AG04450 (cell line): ENCODE measurements at regions of chr2 and their contacts with region 1.

Region 1: DNA sequence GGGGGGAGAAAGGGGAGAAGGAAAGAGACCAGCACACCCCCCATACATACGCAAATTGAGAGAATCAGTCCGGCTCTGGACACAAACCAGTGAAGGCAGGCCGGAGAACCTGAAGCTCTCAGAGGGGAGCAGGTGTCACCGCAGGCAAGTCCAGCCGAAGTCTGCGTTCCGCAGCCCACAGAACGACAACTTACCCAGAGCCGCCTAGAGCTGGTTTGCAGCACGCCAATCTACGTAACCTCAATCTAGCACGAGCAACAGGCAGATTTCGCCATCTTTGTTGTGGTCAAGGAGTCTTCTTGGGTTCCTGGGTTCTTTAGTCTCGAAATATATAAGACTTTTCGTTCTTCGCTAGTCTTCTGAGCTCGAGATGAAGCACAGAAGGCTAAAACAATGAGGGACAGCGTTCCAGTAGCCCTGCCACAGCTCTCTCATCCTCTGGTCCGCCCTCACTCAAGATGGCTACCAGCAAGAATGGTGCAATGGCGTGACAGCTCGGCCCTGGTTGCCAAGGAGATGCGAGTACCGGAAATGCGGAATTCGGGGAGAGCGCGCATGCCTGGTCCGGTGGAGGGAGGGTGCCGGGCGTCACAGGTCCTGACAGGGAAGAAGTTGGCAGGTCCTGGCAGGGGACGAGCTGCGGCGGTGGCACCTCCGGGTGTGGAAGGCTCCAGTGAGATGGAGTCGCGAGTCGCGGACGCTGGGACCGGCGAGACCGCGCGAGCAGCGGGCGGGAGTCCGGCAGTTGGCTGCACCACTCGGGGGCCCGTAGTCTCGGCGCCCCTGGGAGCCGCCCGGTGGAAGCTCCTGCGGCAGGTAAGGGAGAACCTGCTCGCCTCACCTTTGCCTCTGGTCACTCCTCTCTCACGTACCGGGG is at the starts of genes CAMKMT and PREPL:
- DNase-seq: peak; percentile 95
- H3K4me3 ChIP-seq: peak within 1 kb of the TSS; percentile 92
- H3K27ac ChIP-seq: peak within 1 kb of the TSS; percentile 97
- H3K27me3 ChIP-seq: no peaks in the 10 kb centered on the region
- CTCF ChIP-seq: no peak
- polyA plus RNA-seq, gene CAMKMT: 8.0 and 10.2 TPM in 2 replicates
- polyA plus RNA-seq, gene PREPL: 54.6 and 79.6 TPM in 2 replicates

Region 2: GRCh38 chr2:44348400-44348799 is 13.2 kb before region 1 on chr2:
- CTCF ChIA-PET with region 1: interaction called, 7 read pairs
- POLR2A ChIA-PET with region 1: interaction called, 15 read pairs
- DNase-seq: no peak
- H3K4me3 ChIP-seq: no peak overlapping the region
- H3K27ac ChIP-seq: no peak overlapping the region
- H3K27me3 ChIP-seq: no peaks in the 10 kb centered on the region
- CTCF ChIP-seq: no peak

Region 3: DNA sequence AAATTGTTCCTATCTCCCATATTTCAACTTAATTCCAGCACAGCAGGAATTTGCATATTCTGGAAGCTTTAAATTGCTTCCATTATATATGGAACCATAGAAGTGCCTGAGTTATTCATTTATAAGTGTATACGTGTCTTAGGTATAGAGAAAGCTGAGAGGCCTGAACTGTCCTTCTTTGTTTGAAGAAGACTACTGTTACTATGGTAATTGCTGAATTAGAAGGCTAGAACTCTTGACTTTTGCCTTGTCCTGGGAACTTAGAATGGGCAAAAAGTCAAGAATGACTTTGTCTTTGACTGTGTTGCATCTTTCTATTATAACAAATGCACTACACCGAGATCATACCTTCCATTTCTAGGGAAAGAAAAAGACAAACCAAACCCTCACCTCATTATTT is 15.9 kb after region 1 on chr2:
- CTCF ChIA-PET with region 1: no interaction called
- POLR2A ChIA-PET with region 1: no interaction called
- DNase-seq: no peak
- H3K4me3 ChIP-seq: no peak overlapping the region
- H3K27ac ChIP-seq: no peak overlapping the region
- H3K27me3 ChIP-seq: no peaks in the 10 kb centered on the region
- CTCF ChIP-seq: no peak

Region 4: GRCh38 chr2:44549095-44549463 is 187.5 kb after region 1 on chr2:
- CTCF ChIA-PET with region 1: no interaction called
- POLR2A ChIA-PET with region 1: no interaction called
- DNase-seq: peak; percentile 30
- H3K4me3 ChIP-seq: no peak overlapping the region
- H3K27ac ChIP-seq: no peak overlapping the region
- H3K27me3 ChIP-seq: no peaks in the 10 kb centered on the region
- CTCF ChIP-seq: no peak